ENCODE measurements at regions of chr7 and their contacts with region 1.

Region 1: GRCh38 chr7:2501947-2502646 is 17.5 kb upstream of the LFNG start:
- DNase-seq: no peak
- H3K4me3 ChIP-seq: no peak overlapping the region
- H3K27ac ChIP-seq: no peak overlapping the region
- H3K4me1 ChIP-seq: peaks cover 0 to 6% of the 10 kb centered on the region in 2 donors
- H3K27me3 ChIP-seq: no peaks in the 10 kb centered on the region
- CTCF ChIP-seq: no peak
- POLR2A ChIP-seq: no peak

Region 2: DNA sequence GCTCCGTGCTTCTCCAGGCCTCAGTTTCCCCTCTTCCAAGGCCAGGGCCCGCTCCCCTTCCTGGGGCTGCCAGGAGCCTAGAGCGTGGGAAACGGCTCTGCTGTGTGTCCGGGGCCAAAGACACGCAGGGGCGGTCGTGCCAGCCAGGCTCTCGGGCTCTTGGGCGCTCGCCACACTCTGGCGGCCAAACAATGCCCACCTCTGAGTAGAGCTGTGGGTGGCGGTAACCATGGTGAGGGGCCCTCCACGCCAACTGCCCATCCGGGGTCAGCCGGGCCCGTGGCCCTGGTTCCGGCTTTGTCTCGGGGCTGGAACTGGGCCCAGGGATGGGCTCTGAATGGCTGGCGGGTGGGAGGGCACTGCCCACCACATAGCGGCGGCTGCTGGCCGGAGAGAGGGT is 41.9 kb before region 1 on chr7:
- intact Hi-C with region 1: loop called (anchors 1 kb)
- DNase-seq: no peak
- H3K4me3 ChIP-seq: peak overlapping the region in 2 of 3 donors; percentile 22 to 45
- H3K27ac ChIP-seq: no peak overlapping the region
- H3K4me1 ChIP-seq: no peaks in the 10 kb centered on the region
- H3K27me3 ChIP-seq: no peaks in the 10 kb centered on the region
- CTCF ChIP-seq: no peak
- POLR2A ChIP-seq: no peak

Region 3: GRCh38 chr7:2555121-2556052 is 53.3 kb after region 1 on chr7 and contains the start of gene BRAT1:
- intact Hi-C with region 1: no loop called
- DNase-seq: peak; percentile 95 to 99
- H3K4me3 ChIP-seq: peak within 1 kb of the TSS; percentile 81 to 99 (median 86)
- H3K27ac ChIP-seq: peak within 1 kb of the TSS; percentile 96 to 100
- H3K4me1 ChIP-seq: peaks cover 0 to 3% of the 10 kb centered on the region in 2 donors
- H3K27me3 ChIP-seq: no peaks in the 10 kb centered on the region
- CTCF ChIP-seq: peak in 2 of 3 donors; percentile 19 to 38
- POLR2A ChIP-seq: peak; percentile 70
- total RNA-seq, gene BRAT1: 20.8 to 36.4 (median 28.4) TPM

Measured in breast epithelium (tissue), 4 donors.